ENCODE measurements at regions of chr11 and their contacts with region 1.

Region 1: GRCh38 chr11:134040386-134041302 is 28.2 kb upstream of the JAM3 start:
- DNase-seq: peak in 1 of 3 donors; percentile 43
- ATAC-seq: no peak
- H3K4me3 ChIP-seq: no peak overlapping the region
- H3K4me1 ChIP-seq: peaks cover 5% of the 10 kb centered on the region
- CTCF ChIP-seq: no peak

Region 2: DNA sequence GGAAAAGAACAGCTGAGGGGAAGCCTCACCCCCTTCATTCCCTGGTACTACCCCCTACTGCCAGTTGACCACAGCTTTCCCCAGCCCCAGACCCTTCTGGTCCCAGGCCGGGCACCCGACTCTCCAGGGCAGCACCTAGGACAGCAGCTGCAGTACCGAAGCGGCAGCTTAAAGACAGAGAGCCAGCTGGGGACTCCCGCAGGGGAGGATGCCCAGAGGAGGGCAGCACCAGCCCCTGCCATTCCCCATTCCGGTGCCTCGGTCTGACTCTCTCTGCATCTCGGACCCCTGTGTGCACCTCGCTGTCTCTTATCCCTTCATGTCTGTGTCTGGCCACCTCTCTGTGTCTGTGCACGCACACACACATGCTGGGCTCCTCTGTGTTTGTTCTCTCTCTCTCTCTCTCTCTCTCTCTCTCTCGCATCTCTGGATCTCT is 93.3 kb before region 1 on chr11:
- intact Hi-C with region 1: loop called in 1 of 2 experiments (anchors 5 kb)
- DNase-seq: peak in 1 of 3 donors; percentile 51
- ATAC-seq: peak; percentile 60
- H3K4me3 ChIP-seq: no peak overlapping the region
- H3K4me1 ChIP-seq: no peaks in the 10 kb centered on the region
- CTCF ChIP-seq: no peak